Lower leg skin (tissue), 4 donors: ENCODE measurements at regions of chr5 and their contacts with region 1.

Region 1: GRCh38 chr5:151134238-151134637 is 23.3 kb downstream of the ANXA6 start:
- DNase-seq: no peak
- H3K4me3 ChIP-seq: no peak overlapping the region
- CTCF ChIP-seq: no peak
- POLR2A ChIP-seq: no peak

Region 2: GRCh38 chr5:151164686-151165392 is 30.6 kb after region 1 on chr5:
- intact Hi-C with region 1: loop called (anchors 5 kb)
- DNase-seq: peak; percentile 77 to 94
- H3K4me3 ChIP-seq: no peak overlapping the region
- CTCF ChIP-seq: peak in 1 of 3 donors; percentile 75
- POLR2A ChIP-seq: no peak